ENCODE measurements at regions of chr16 and their contacts with region 1.

Region 1: DNA sequence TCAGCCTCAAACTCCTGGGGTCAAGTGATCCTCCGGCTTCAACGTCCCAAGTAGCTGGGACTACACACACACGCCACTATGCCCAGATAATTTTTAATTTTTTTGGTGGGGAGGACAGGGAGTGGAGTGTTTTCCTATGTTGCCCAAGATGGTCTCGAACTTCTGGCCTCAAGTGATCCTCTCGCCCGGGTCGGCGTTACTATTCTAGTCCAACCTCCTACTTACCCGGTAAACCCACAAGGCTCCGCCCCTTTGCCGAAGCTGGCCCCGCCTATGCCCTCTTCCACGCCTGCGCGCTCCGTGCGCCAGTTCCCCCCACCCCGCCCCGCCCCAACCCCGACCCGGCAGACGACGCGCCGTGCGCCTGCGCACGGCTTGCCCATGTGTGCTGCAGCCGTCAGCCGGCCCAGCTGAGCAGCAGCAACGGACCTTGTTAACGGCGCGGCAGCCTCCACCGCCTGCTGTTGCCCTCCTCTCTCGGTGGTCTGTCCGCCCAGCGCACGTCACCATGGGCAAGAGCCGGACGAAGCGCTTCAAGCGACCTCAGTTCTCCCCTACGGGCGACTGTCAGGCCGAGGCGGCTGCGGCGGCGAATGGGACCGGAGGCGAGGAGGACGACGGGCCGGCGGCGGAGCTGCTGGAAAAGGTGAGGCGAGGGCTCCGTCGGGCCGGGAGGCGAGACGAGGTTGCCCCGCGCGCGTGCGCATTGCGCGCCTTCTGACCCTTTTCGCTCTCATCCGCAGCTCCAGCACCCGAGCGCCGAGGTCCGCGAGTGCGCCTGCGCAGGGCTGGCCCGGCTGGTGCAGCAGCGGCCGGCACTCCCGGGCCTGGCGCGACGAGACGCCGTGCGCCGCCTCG is at the start of gene HEATR3:
- DNase-seq: peak; percentile 81 to 97 (median 93)

Region 2: GRCh38 chr16:50024684-50025536 is 40.9 kb before region 1 on chr16 and contains the start of gene CNEP1R1:
- intact Hi-C with region 1: loop called (anchors 5 kb)
- DNase-seq: peak; percentile 88 to 98 (median 94)

Region 3: GRCh38 chr16:50050802-50051201 is 15.1 kb before region 1 on chr16:
- intact Hi-C with region 1: no loop called
- DNase-seq: no peak

Region 4: DNA sequence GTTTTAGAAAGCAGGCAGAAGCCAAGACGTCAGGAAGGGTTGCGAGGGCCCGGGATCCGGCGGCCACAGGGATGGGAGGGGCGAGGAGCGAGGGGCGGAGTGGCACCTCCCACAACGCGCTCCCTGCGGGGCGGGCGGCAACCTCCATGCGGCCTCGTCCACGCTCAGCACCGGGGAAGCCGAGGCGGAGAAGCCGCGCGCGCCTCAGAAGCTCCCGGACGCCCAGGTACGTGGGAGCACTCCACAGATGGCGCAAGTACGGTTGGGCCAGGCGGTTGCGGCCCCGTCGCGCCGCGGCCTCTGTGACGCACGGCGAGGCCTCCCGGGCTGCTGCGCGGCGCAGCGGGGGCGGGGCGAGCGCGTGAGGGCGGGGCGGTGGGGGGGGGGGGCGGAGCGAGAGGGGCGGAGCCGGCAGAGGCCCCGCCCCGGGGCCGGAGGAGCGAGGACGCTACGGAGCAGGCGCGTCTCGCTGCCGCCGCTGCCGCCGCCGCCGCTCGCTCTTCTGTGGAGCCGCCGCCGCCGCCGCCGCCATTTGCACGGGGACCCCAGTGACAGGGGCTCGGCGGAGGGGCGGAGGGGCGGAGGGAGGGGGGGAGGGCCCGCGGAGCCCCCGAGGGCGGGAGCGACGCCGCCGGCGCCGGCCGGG is 87.1 kb after region 1 on chr16 and contains the start of gene TENT4B:
- intact Hi-C with region 1: loop called (anchors 5 kb)
- DNase-seq: peak; percentile 67 to 95 (median 90)

Region 5: GRCh38 chr16:50210266-50211038 is 144.6 kb after region 1 on chr16:
- intact Hi-C with region 1: loop called (anchors 10 kb)
- DNase-seq: peak; percentile 71 to 94 (median 86)

Region 6: DNA sequence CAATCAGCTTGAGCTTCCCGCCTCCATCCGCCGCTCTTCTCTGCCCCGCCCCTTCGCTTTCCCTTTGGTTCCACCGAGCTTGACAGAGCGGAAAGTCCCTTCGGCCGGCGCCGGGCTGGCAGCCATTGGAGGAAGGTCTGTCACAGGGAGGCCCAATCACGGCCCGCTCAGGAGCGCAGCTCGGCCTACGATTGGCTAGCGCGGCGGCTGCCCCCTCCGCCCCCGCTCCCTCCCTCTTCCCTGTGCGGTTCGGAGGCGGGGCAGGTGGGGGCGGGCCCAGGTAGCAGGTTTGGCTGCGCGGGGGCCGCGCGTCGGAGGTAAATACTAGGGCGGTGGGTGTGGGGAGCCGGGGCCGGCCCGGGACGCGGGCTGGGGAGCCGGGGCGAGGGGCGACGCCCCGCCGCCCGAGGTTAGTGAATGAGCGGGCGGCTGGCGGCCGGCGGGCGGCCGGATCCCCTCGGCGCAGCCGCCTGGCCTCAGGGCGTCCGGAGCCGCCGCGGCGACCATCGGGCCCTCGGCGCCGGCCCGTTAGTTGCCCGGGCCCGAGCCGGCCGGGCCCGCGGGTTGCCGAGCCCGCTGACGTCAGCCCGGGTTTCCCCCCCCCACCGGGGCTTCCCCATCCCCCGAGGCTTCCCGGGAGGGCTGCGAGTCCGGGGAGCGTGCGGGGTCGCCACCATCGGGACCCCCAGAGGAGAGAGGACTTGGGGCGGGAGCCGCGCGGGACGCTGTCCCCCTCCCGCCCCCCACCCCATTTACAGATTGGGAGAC is 676.1 kb after region 1 on chr16 and contains the start of gene CYLD:
- intact Hi-C with region 1: loop called (anchors 5 kb)
- DNase-seq: peak; percentile 99 to 100 (median 100)